ENCODE measurements at regions of chr7 and their contacts with region 1.

Region 1: DNA sequence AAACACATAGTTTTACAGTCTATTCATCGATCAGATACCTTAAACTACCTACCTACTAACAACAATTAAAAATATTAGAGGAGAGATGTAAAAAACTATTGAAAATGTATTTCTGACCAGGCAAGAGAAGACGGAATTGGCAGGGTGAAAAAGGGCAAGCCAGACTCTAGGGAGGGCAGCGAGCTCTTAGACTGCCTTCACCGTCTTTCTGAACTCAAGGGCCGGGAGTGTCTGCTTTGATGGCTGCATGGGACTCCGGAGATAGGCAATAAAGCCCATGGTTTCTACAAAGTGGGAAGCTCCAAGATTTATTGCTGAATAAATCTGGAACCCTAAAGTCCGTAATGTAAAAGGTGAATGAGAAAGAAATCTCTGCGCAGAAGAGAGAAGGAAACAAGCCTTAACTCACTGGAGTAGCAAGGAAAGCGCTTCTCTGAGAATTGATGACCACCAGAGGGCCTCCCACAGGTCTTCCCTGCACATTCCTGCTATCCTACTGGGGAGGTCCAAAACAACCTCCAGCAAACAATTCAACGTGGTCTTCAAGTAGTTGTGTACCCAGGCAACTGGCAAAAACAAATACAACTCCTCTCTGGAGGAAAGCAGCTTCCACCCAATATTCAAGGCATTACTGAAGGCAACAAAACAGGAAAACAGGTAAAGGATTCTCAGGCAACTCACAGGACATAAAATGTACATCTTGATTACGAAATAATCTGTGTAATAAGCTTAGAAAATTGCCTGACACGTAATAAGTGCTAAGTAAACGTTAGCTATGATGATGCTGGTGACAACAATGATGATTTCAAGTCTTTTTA is 181.3 kb downstream of the SDK1 start:
- DNase-seq: peak; percentile 35
- ATAC-seq: peak; percentile 81
- H3K4me3 ChIP-seq: no peak overlapping the region
- H3K27ac ChIP-seq: no peak overlapping the region
- H3K4me1 ChIP-seq: 0 out of 2 replicates have a peak, but pooled peaks cover 2% of the 10 kb centered on the region
- H3K27me3 ChIP-seq: no peaks in the 10 kb centered on the region
- CTCF ChIP-seq: peak; percentile 37
- POLR2A ChIP-seq: no peak
- RAD21 ChIP-seq: peak; percentile 39

Region 2: GRCh38 chr7:3537210-3537875 is 55.0 kb after region 1 on chr7:
- CTCF ChIA-PET with region 1: no interaction called
- POLR2A ChIA-PET with region 1: no interaction called
- dilution Hi-C with region 1: no loop called
- in situ Hi-C with region 1: no loop called
- intact Hi-C with region 1: no loop called
- DNase-seq: peak; percentile 80
- ATAC-seq: peak; percentile 99
- H3K4me3 ChIP-seq: no peak overlapping the region
- H3K27ac ChIP-seq: no peak overlapping the region
- H3K4me1 ChIP-seq: peaks cover 3% of the 10 kb centered on the region; the same call in 1 of the 2 replicates
- H3K27me3 ChIP-seq: no peaks in the 10 kb centered on the region
- CTCF ChIP-seq: no peak
- POLR2A ChIP-seq: no peak
- RAD21 ChIP-seq: no peak

Region 3: GRCh38 chr7:3760651-3761050 is 278.3 kb after region 1 on chr7:
- CTCF ChIA-PET with region 1: no interaction called
- POLR2A ChIA-PET with region 1: no interaction called
- dilution Hi-C with region 1: no loop called
- in situ Hi-C with region 1: no loop called
- intact Hi-C with region 1: loop called (anchors 5 kb)
- DNase-seq: peak; percentile 16
- ATAC-seq: peak; percentile 15; the same call in 1 of the 2 replicates
- H3K4me3 ChIP-seq: no peak overlapping the region
- H3K27ac ChIP-seq: no peak overlapping the region
- H3K4me1 ChIP-seq: peaks cover 5% of the 10 kb centered on the region; the same call in 1 of the 2 replicates
- H3K27me3 ChIP-seq: peaks cover 1% of the 10 kb centered on the region; the same call in 1 of the 2 replicates
- CTCF ChIP-seq: no peak
- POLR2A ChIP-seq: no peak
- RAD21 ChIP-seq: no peak

Region 4: DNA sequence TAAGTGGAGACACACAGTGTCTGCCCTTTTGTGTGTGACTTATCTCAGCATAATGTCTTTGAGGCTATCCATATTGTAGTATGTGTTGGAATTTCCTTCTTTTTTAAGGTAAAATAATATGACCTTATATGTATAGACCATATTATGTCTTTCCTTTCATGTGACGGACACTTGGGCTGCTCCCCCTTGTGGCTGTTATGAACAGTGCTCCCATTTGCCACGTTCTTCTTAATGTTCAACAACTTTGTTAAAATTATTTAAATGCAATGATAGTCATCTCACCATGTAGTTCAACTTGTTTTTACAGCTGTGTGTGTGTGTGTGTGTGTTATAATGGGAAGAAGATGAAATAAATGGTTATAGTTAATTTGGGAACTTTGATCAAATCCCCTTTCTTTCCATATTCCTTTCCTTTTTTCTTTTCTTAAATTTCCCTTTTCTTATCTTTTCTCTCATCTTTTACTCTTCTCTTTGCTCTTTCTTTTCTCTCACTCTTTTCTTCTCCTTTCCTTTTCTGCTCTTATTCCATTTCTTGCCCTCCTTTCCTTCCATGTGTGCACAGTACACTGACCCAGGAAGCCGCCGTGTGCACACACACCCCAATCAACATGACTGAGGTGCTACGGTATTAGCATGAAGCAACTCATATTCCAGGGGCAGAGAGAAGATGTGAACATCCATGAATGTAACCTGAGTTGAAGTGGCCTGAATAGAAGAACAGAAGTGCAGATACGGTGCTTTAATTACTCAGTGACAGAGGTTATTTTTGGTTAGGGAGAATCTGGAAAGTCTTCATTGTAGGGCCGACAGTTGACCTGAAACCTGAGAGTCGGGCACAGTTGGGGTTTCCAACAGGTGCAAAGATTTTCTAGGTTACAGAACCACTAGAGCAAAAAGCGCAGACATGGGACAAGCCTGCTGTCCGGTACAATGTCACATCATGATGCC is 415.4 kb after region 1 on chr7:
- CTCF ChIA-PET with region 1: no interaction called
- POLR2A ChIA-PET with region 1: no interaction called
- dilution Hi-C with region 1: no loop called
- in situ Hi-C with region 1: no loop called
- intact Hi-C with region 1: loop called (anchors 5 kb)
- DNase-seq: peak; percentile 62
- ATAC-seq: peak; percentile 85
- H3K4me3 ChIP-seq: no peak overlapping the region
- H3K27ac ChIP-seq: no peak overlapping the region
- H3K4me1 ChIP-seq: no peaks in the 10 kb centered on the region; the same call in 1 of the 2 replicates
- H3K27me3 ChIP-seq: no peaks in the 10 kb centered on the region
- CTCF ChIP-seq: peak; percentile 65
- POLR2A ChIP-seq: no peak
- RAD21 ChIP-seq: peak; percentile 63